ENCODE measurements at regions of chr9 and their contacts with region 1.

Region 1: GRCh38 chr9:112530751-112531205 is 44.2 kb downstream of the KIAA1958 start:
- DNase-seq: no peak
- H3K4me3 Mint-ChIP-seq: no peak overlapping the region
- H3K27ac Mint-ChIP-seq: no peak overlapping the region
- H3K4me1 Mint-ChIP-seq: no peaks in the 10 kb centered on the region
- H3K27me3 Mint-ChIP-seq: no peaks in the 10 kb centered on the region

Region 2: DNA sequence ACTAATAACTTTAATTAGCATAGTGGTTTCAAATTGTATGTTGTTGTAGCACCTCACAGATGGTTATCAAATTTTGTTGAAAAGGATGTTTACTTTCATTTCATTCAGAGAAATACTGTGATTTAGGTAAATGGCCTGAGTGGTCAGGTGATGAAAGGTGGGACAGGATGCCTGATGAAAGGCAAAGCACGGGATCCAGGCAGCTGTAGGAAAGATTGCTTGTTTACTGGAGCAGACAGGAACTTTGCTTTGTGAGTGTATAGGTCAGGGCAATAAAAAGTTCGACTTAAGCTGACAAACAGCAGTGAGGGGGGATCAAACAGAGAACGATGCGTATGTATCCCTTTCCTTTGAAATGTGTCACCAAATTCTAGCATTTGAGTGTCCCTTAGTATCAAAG is 25.2 kb before region 1 on chr9:
- intact Hi-C with region 1: loop called (anchors 2 kb)
- DNase-seq: no peak
- H3K4me3 Mint-ChIP-seq: no peak overlapping the region
- H3K27ac Mint-ChIP-seq: no peak overlapping the region
- H3K4me1 Mint-ChIP-seq: no peaks in the 10 kb centered on the region
- H3K27me3 Mint-ChIP-seq: no peaks in the 10 kb centered on the region

Region 3: GRCh38 chr9:112520656-112521055 is 10.1 kb before region 1 on chr9:
- intact Hi-C with region 1: no loop called
- DNase-seq: no peak
- H3K4me3 Mint-ChIP-seq: no peak overlapping the region
- H3K27ac Mint-ChIP-seq: no peak overlapping the region
- H3K4me1 Mint-ChIP-seq: no peaks in the 10 kb centered on the region
- H3K27me3 Mint-ChIP-seq: no peaks in the 10 kb centered on the region

Region 4: DNA sequence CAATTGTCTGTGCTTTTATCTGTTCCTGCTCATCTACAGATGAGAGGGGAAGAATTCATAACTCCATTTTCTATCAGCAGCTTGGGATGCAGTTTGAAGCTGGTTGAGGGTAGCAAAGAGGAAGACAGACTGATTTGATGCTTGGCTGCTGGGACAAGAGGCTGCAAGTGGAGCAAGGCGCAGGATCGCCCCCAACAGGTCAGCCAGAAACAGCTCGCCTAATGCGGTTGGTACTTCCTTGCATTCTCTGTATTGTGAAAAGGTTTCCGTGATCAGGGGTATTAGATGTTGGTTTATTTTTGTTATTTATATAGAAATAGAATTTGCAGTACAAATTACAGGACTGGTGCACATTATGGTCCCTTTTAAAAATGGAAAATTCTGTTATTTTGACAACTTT is 440.6 kb after region 1 on chr9:
- intact Hi-C with region 1: no loop called
- DNase-seq: no peak
- H3K4me3 Mint-ChIP-seq: no peak overlapping the region
- H3K27ac Mint-ChIP-seq: no peak overlapping the region
- H3K4me1 Mint-ChIP-seq: no peaks in the 10 kb centered on the region
- H3K27me3 Mint-ChIP-seq: peaks cover 2% of the 10 kb centered on the region

Measured in activated T-helper 1 cell treated with anti-CD3 and anti-CD28 coated beads, Interleukin-12 subunit alpha, Interleukin-12 subunit beta, Interleukin-2, Interleukin-4 antibody, amounts not matched to agents 30 ng/mL and 10 ng/mL and 1 ng/mL, durations not matched to agents 14 hours and 24 hours and 36 hours (primary cell).